A549 (cell line): ENCODE measurements at regions of chr15 and their contacts with region 1.

Region 1: DNA sequence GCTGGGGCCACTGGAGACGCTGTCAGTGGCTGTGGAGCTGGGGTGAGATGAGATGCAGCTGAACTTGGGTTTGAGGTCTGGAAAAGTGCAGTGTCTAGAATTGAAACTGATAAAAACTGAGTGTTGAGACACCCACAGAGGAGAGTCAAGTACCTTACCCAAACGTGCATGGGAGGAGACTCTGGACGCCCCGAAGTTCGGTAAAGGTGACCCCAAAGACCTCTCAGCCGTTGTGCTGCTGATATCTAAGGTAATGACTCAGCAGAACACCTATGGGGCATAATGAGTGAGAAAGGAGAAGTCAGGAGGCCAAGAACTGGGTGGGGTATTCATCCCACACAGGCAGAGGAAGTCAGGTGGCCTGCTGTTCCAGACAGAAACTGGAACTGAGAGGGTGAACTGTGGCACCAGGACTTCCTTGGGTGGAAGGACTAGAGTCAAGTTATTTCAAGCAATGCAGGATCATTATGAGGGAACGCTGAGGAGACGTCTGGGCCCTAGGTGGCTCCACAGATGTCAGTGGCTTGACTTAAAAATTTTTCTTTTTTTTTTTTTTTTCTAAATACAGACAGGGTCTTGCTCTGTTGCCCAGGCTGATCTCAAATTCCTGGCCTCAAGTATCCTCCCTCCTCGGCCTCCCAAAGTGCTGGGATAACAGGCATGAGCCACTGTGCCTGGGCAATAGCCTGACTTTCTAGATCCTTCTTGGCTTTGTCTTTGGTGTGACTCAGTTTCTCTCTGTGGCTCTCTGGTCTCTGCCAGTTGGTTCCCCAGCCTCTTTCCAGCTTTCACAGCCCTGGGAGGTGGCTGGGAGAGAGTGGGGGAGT is 67.6 kb upstream of the GCNT3 start:
- DNase-seq: no peak
- ATAC-seq: no peak; a peak in 2 of 6 replicates
- H3K4me3 ChIP-seq: no peak overlapping the region
- H3K27ac ChIP-seq: peak overlapping the region; percentile 10 to 65; a peak in 4 of 6 replicates
- H3K4me1 ChIP-seq: peaks cover 15% of the 10 kb centered on the region
- CTCF ChIP-seq: no peak
- EP300 ChIP-seq: no peak
- POLR2A ChIP-seq: no peak
- RAD21 ChIP-seq: no peak

Region 2: GRCh38 chr15:59516655-59517461 is 27.1 kb before region 1 on chr15:
- CTCF ChIA-PET with region 1: no interaction called
- POLR2A ChIA-PET with region 1: no interaction called
- DNase-seq: no peak
- ATAC-seq: 0 out of 6 replicates have a peak, but pooled peaks of 1 of the 2 experiments have one; percentile 24
- H3K4me3 ChIP-seq: no peak overlapping the region
- H3K27ac ChIP-seq: no peak overlapping the region
- H3K4me1 ChIP-seq: no peaks in the 10 kb centered on the region
- CTCF ChIP-seq: no peak
- EP300 ChIP-seq: no peak
- POLR2A ChIP-seq: no peak
- RAD21 ChIP-seq: no peak

Region 3: DNA sequence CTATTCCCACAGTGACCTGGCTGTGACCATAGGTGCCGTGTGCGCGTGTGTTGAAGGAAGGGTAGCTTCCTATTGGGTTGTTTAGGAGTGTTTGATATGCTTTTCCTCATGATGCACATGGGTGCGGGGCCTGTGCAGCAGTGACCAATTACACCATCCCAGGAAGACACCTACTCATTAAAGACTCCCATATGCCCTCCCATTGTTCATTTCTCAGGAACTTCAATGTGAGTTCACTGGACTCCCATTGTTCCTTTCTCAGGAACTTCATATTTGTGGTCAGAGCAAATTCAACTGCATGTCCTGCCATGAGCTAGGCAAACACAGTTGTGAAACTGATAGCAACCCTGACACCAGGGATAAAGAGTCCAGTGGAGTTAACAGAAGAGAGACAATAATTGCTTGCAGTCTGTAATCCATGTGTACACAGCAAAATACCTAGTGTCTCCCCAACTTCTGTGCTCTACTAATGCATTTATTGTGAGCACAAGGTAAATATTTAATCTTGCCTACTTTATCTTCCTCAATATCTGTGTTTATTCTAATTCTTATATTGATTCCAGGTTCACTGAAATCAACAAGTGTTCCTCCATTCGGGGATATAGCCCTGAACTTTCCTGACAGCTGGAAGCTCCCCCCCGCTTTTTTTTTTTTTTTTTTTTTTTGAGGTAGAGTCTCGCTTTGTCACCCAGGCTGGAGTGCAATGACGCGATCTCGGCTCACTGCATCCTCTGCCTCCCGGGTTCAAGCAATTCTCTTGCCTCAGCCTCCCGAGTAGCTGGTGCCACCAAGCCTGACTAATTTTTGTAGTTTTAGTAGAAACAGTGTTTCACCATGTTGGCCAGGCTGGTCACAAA is 10.2 kb after region 1 on chr15:
- CTCF ChIA-PET with region 1: interaction called, 312 read pairs
- POLR2A ChIA-PET with region 1: no interaction called
- DNase-seq: peak; percentile 57 to 94
- ATAC-seq: peak; percentile 68 to 87
- H3K4me3 ChIP-seq: no peak overlapping the region
- H3K27ac ChIP-seq: peak overlapping the region; percentile 59 to 66
- H3K4me1 ChIP-seq: peaks cover 53% of the 10 kb centered on the region
- CTCF ChIP-seq: no peak
- EP300 ChIP-seq: peak in 1 of 2 experiments; percentile 37; a peak in 1 of 5 replicates
- POLR2A ChIP-seq: no peak
- RAD21 ChIP-seq: no peak

Region 4: GRCh38 chr15:59632714-59633113 is 88.8 kb after region 1 on chr15:
- CTCF ChIA-PET with region 1: interaction called, 685 read pairs
- POLR2A ChIA-PET with region 1: no interaction called
- DNase-seq: peak; percentile 54 to 68
- ATAC-seq: peak; percentile 90
- H3K4me3 ChIP-seq: no peak overlapping the region
- H3K27ac ChIP-seq: no peak overlapping the region
- H3K4me1 ChIP-seq: peaks cover 7% of the 10 kb centered on the region; the same call in 1 of the 3 replicates
- CTCF ChIP-seq: peak; percentile 63
- EP300 ChIP-seq: no peak
- POLR2A ChIP-seq: no peak
- RAD21 ChIP-seq: peak; percentile 64 to 84